K562 (cell line): ENCODE measurements at regions of chr12 and their contacts with region 1.

Region 1: DNA sequence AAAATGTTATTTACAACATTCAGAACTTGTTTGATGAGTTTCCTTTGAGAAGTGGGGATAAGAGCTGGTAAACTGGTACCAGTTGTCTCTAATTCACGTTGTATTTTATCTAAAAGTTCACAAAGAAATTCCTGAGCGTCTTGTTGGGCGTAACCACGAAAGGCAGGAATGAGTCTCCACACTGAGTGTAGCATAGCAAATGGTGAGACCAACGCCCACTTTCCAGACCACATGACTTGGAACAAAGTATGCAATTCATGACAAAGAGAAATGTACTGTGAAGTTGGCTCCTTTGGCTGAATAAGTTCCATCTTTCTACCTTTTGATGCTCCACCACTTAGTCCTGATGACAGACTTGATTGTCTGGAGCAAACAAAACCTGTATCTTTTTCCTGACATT is 18.4 kb downstream of the USP44 start:
- DNase-seq: no peak
- ATAC-seq: peak; percentile 38; the same call in 1 of the 3 replicates
- H3K4me3 ChIP-seq: no peak overlapping the region
- H3K27ac ChIP-seq: no peak overlapping the region
- H3K4me1 ChIP-seq: no peaks in the 10 kb centered on the region
- H3K27me3 ChIP-seq: no peaks in the 10 kb centered on the region
- CTCF ChIP-seq: no peak
- EP300 ChIP-seq: no peak
- POLR2A ChIP-seq: no peak
- RAD21 ChIP-seq: no peak

Region 2: DNA sequence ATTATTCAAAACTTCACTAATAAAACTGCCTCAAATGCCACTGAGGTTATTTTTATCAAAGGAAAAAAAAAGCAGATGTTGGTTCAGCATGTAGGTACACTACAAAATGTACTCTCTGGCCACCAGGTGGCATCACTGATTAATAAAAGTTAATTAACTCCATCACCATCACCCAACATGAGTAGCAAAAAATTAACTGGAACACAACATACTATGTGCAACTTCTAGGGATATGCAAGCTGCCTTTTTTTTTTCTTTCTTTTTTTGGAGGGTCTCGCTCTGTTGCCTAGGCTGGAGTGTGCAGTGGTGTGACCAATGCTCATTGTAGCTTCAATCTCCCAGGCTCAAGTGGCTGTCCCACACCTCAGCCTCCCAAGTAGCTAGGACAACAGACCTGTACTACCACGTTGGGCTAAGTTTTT is 415.7 kb before region 1 on chr12:
- CTCF ChIA-PET with region 1: interaction called, 25 read pairs
- POLR2A ChIA-PET with region 1: no interaction called
- in situ Hi-C with region 1: loop called (anchors 5 kb)
- intact Hi-C with region 1: loop called (anchors 1 kb)
- DNase-seq: peak; percentile 54 to 84 (median 60)
- ATAC-seq: peak; percentile 97
- H3K4me3 ChIP-seq: no peak overlapping the region
- H3K27ac ChIP-seq: no peak overlapping the region
- H3K4me1 ChIP-seq: no peaks in the 10 kb centered on the region; a peak in 1 of 5 replicates
- H3K27me3 ChIP-seq: no peaks in the 10 kb centered on the region
- CTCF ChIP-seq: peak; percentile 52 to 78 (median 66); a peak in 5 of 6 replicates
- EP300 ChIP-seq: no peak
- POLR2A ChIP-seq: no peak
- RAD21 ChIP-seq: peak; percentile 94 to 97